ENCODE measurements at regions of chr19 and their contacts with region 1.

Region 1: GRCh38 chr19:38634757-38635482 is 12.5 kb upstream of the ACTN4 start:
- DNase-seq: peak; percentile 80 to 93
- ATAC-seq: peak; percentile 58 to 64; a peak in 5 of 6 replicates
- H3K4me3 ChIP-seq: no peak overlapping the region
- H3K27ac ChIP-seq: peak overlapping the region; percentile 9 to 77; a peak in 3 of 6 replicates
- H3K4me1 ChIP-seq: peaks cover 55% of the 10 kb centered on the region
- CTCF ChIP-seq: peak; percentile 99
- EP300 ChIP-seq: no peak
- POLR2A ChIP-seq: no peak
- RAD21 ChIP-seq: peak; percentile 82 to 88

Region 2: GRCh38 chr19:38478273-38478967 is 156.5 kb before region 1 on chr19:
- CTCF ChIA-PET with region 1: interaction called, 14 read pairs
- POLR2A ChIA-PET with region 1: no interaction called
- DNase-seq: peak; percentile 79 to 90
- ATAC-seq: peak; percentile 83 to 91
- H3K4me3 ChIP-seq: no peak overlapping the region
- H3K27ac ChIP-seq: no peak overlapping the region
- H3K4me1 ChIP-seq: no peaks in the 10 kb centered on the region
- CTCF ChIP-seq: peak; percentile 65
- EP300 ChIP-seq: no peak
- POLR2A ChIP-seq: no peak
- RAD21 ChIP-seq: peak; percentile 75 to 92

Region 3: DNA sequence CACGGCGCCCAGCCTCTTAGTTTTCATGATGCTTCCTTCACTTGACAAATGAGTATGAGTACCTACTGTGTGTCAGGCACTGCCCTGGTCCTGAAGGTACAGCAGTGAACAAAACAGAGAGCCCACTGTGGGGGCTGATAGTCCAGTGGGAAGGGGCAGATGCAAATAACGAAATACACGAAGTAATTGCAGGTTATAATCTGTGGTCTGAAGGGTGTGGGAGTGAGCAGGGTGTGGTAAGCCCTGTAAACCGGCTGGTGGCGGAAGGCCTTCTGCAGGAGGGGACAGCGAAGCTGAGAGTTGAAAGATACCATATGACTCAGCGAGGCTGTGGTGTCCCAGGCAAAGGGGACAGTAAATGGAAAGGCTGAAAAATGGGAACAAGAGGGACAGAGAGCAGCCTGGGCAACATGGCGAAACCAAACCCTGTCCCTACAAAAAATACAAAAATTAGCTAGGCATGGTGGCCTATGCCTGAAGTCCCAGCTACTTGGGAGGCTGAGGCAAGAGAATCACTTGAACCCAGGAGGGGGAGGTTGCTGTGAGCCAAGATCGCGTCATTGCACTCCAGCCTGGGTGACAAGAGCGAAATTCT is 77.6 kb before region 1 on chr19:
- CTCF ChIA-PET with region 1: interaction called, 31 read pairs
- POLR2A ChIA-PET with region 1: interaction called, 3 read pairs
- DNase-seq: peak in 1 of 2 experiments; percentile 44
- ATAC-seq: peak in 1 of 2 experiments; percentile 26; a peak in 3 of 6 replicates
- H3K4me3 ChIP-seq: no peak overlapping the region
- H3K27ac ChIP-seq: no peak overlapping the region
- H3K4me1 ChIP-seq: no peaks in the 10 kb centered on the region
- CTCF ChIP-seq: no peak
- EP300 ChIP-seq: no peak
- POLR2A ChIP-seq: no peak
- RAD21 ChIP-seq: no peak

Region 4: GRCh38 chr19:38653028-38653571 is 18.2 kb after region 1 on chr19:
- CTCF ChIA-PET with region 1: interaction called, 157 read pairs
- POLR2A ChIA-PET with region 1: interaction called, 18 read pairs
- DNase-seq: peak in 1 of 2 experiments; percentile 82
- ATAC-seq: peak in 1 of 2 experiments; percentile 6; a peak in 2 of 6 replicates
- H3K4me3 ChIP-seq: peak overlapping the region; percentile 85; the same call in 2 of the 3 replicates
- H3K27ac ChIP-seq: peak overlapping the region; percentile 87 to 91
- H3K4me1 ChIP-seq: peaks cover 78% of the 10 kb centered on the region
- CTCF ChIP-seq: no peak
- EP300 ChIP-seq: no peak
- POLR2A ChIP-seq: no peak
- RAD21 ChIP-seq: 0 out of 5 replicates have a peak, but pooled peaks of 1 of the 2 experiments have one; percentile 7

Region 5: DNA sequence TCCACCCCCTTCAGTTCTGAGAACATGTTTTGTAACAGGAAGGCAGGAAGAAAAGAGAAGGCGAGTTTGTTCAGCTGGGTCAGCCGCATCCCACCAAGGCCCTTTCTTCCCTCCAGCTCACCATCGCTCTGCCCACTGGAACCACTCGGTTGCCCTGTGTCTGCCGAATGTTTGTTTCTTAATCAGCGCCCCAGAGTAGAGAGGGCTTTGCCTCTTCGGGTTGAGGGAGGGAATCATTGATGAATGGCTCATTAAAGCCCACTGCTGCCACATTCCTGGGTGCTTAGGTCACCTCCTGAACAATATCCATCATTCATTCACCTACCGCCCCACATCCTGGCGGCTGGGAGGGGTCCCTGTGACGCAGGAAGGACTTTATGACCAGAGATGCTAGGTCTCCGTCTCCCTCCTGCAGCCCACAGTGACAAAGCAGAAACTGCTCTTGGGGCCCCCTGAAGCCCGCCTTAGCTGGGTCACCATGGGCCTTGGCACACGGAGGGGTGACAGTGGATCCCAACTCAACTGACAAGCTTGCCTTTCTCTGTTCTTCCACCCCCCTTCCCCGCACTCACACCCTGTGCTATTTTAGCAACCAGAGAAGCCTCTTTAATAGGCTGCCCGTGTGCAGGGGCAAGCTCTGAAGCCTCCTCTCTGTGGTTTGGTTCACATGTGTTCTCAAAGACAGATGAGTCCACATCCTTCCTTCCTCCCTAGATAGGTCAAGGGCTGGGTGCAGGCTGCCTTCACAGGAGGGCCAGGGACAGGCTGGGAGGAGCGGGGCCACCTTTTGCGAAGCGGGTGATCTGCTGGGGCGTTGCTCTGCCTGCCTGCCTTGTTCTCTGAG is 58.7 kb after region 1 on chr19:
- CTCF ChIA-PET with region 1: interaction called, 50 read pairs
- POLR2A ChIA-PET with region 1: interaction called, 4 read pairs
- DNase-seq: peak; percentile 91 to 92
- ATAC-seq: peak; percentile 10 to 54
- H3K4me3 ChIP-seq: 0 out of 3 replicates have a peak overlapping the region, but pooled peaks have one; percentile 1
- H3K27ac ChIP-seq: peak overlapping the region; percentile 93 to 94
- H3K4me1 ChIP-seq: peaks cover 100% of the 10 kb centered on the region
- CTCF ChIP-seq: no peak
- EP300 ChIP-seq: peak; percentile 55 to 84; a peak in 3 of 5 replicates
- POLR2A ChIP-seq: no peak
- RAD21 ChIP-seq: 0 out of 5 replicates have a peak, but pooled peaks of 1 of the 2 experiments have one; percentile 8

Region 6: GRCh38 chr19:38838573-38839269 is 203.8 kb after region 1 on chr19:
- CTCF ChIA-PET with region 1: interaction called, 13 read pairs
- POLR2A ChIA-PET with region 1: no interaction called
- DNase-seq: peak in 1 of 2 experiments; percentile 62
- ATAC-seq: peak; percentile 6 to 8; a peak in 4 of 6 replicates
- H3K4me3 ChIP-seq: no peak overlapping the region
- H3K27ac ChIP-seq: peak overlapping the region; percentile 36 to 76; a peak in 4 of 6 replicates
- H3K4me1 ChIP-seq: peaks cover 92% of the 10 kb centered on the region
- CTCF ChIP-seq: no peak
- EP300 ChIP-seq: no peak
- POLR2A ChIP-seq: no peak
- RAD21 ChIP-seq: 0 out of 5 replicates have a peak, but pooled peaks of 1 of the 2 experiments have one; percentile 26

Region 7: DNA sequence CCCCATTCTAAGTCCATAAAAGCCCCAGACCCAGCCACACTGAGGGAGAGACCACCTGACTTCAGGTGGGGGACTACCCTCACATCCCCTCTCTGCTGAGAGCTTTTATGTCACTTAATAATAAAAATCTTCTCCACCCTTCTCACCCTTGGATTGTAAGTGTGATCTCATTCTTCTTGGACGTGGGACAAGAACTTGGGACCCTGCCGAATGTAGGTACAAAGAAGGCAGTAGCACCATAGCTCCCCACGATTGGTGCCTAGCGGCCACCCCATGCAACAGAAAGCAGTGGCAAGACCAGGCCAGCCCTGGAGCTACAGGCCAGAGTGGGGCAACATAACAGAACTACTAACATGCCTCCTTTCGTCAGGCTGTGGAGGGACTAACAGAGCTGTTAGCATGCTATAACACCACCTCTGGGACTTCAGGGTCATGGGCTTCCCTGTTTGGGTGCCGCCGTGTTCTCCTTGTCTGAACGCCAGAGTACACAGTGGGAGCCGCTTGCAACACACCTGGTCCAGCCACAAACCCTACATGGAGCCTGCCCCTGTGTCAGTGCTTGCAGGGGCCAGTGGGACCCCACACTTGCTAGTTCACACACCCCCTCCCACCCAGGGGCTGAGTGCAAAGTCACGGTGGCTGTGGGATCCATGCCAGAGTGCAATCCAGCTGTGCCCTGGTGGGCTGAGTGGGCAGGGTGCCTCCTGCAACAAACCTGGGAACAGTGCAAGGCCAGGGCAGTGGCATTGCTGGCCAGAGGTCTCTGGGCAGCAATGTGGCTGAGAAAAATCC is 345.9 kb after region 1 on chr19:
- CTCF ChIA-PET with region 1: no interaction called
- POLR2A ChIA-PET with region 1: no interaction called
- DNase-seq: no peak
- ATAC-seq: no peak
- H3K4me3 ChIP-seq: no peak overlapping the region
- H3K27ac ChIP-seq: no peak overlapping the region
- H3K4me1 ChIP-seq: peaks cover 22% of the 10 kb centered on the region
- CTCF ChIP-seq: no peak
- EP300 ChIP-seq: no peak
- POLR2A ChIP-seq: no peak
- RAD21 ChIP-seq: no peak